ENCODE measurements at regions of chr18 and their contacts with region 1.

Region 1: DNA sequence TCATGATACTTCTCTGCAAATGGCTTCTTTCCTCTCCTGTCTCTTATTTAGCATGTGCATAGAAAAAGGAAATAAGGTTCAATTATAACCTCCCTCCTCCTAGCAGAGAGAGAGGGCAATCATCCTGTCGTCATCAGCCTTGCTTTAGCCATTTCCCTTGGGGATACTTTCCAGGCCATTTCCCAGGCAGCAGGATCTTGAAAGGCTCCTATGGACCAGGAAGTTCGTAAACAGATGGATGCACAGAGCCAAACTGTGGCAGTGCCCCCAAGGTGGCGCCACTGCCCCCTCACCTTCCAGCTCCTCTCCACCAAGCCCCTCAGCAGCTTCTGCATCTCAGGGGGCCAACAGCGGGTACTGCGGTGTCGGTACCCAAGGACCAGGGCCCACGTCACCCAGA is 157.4 kb downstream of the DTNA start:
- DNase-seq: no peak
- ATAC-seq: no peak
- H3K4me3 Mint-ChIP-seq: no peak overlapping the region
- H3K27ac Mint-ChIP-seq: no peak overlapping the region
- H3K4me1 Mint-ChIP-seq: no peaks in the 10 kb centered on the region
- H3K27me3 Mint-ChIP-seq: peaks cover 3% of the 10 kb centered on the region
- CTCF ChIP-seq: no peak

Region 2: DNA sequence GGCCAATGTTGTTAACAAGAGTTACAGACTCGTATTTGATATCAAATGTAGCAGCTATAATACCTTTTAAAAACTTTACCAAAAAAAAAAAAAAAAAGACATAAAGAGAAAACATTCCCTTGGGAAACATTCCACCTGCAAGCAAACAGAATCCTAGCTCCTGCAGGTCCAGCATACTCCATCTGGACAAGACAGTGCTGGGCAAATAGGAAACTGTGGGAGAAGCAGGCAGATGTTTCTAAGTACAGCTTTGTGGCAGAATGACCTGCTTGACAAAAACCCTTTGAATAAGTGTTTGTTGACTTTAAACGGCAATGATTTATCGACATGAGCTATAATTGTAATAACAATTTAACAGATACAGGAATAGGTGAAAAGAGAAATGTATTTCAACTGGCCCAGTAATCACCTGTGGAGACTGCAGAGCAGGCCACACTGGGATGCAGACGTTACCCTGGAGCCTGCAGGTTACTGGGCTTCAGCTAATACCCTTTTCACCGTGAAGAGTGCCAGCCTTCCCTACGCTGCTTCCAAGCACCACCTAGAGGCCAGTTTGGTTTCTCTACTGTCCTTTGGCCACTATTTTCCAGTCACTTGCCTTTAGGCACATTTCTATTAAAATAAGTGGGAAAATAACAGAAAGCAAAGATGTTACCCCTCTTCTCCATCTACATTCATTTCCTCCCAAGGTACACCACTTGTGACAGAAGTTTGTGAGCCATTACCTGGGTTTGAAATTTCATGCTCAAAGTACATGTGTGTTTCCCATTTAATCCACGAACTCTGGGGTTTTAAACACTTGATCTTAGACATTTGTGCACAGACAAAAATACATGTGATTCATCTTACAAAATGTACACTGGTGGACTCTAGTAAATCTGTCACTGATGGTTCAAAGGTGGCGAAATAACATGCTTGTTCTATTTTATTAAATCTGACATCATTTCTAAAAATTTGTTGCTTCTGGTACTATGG is 276.4 kb after region 1 on chr18:
- CTCF ChIA-PET with region 1: interaction called, 4 read pairs
- POLR2A ChIA-PET with region 1: no interaction called
- intact Hi-C with region 1: loop called (anchors 5 kb)
- DNase-seq: no peak
- ATAC-seq: peak; percentile 74
- H3K4me3 Mint-ChIP-seq: no peak overlapping the region
- H3K27ac Mint-ChIP-seq: no peak overlapping the region
- H3K4me1 Mint-ChIP-seq: peaks cover 49% of the 10 kb centered on the region
- H3K27me3 Mint-ChIP-seq: no peaks in the 10 kb centered on the region
- CTCF ChIP-seq: no peak

Region 3: GRCh38 chr18:35355140-35355618 is 487.7 kb after region 1 on chr18:
- CTCF ChIA-PET with region 1: no interaction called
- POLR2A ChIA-PET with region 1: no interaction called
- intact Hi-C with region 1: loop called (anchors 10 kb)
- DNase-seq: no peak
- ATAC-seq: peak; percentile 100
- H3K4me3 Mint-ChIP-seq: no peak overlapping the region
- H3K27ac Mint-ChIP-seq: no peak overlapping the region
- H3K4me1 Mint-ChIP-seq: peaks cover 5% of the 10 kb centered on the region
- H3K27me3 Mint-ChIP-seq: no peaks in the 10 kb centered on the region
- CTCF ChIP-seq: no peak